ENCODE measurements at regions of chr10 and their contacts with region 1.

Region 1: GRCh38 chr10:6473901-6474370 is 106.1 kb downstream of the PRKCQ start:
- DNase-seq: no peak
- H3K4me3 Mint-ChIP-seq: peak overlapping the region; percentile 83
- H3K27ac Mint-ChIP-seq: peak overlapping the region; percentile 95
- H3K4me1 Mint-ChIP-seq: peaks cover 60% of the 10 kb centered on the region
- H3K27me3 Mint-ChIP-seq: no peaks in the 10 kb centered on the region

Region 2: GRCh38 chr10:6423004-6423403 is 50.9 kb before region 1 on chr10:
- intact Hi-C with region 1: loop called (anchors 2 kb)
- DNase-seq: no peak
- H3K4me3 Mint-ChIP-seq: no peak overlapping the region
- H3K27ac Mint-ChIP-seq: peak overlapping the region; percentile 88
- H3K4me1 Mint-ChIP-seq: peaks cover 26% of the 10 kb centered on the region
- H3K27me3 Mint-ChIP-seq: no peaks in the 10 kb centered on the region

Region 3: GRCh38 chr10:6486297-6486696 is 12.4 kb after region 1 on chr10:
- intact Hi-C with region 1: no loop called
- DNase-seq: no peak
- H3K4me3 Mint-ChIP-seq: no peak overlapping the region
- H3K27ac Mint-ChIP-seq: no peak overlapping the region
- H3K4me1 Mint-ChIP-seq: peaks cover 59% of the 10 kb centered on the region
- H3K27me3 Mint-ChIP-seq: no peaks in the 10 kb centered on the region

Region 4: GRCh38 chr10:6612371-6612770 is 138.4 kb after region 1 on chr10:
- intact Hi-C with region 1: no loop called
- DNase-seq: no peak
- H3K4me3 Mint-ChIP-seq: peak overlapping the region; percentile 6
- H3K27ac Mint-ChIP-seq: peak overlapping the region; percentile 44
- H3K4me1 Mint-ChIP-seq: peaks cover 79% of the 10 kb centered on the region
- H3K27me3 Mint-ChIP-seq: no peaks in the 10 kb centered on the region

Region 5: GRCh38 chr10:6912424-6912823 is 438.5 kb after region 1 on chr10:
- intact Hi-C with region 1: loop called (anchors 5 kb)
- DNase-seq: no peak
- H3K4me3 Mint-ChIP-seq: no peak overlapping the region
- H3K27ac Mint-ChIP-seq: no peak overlapping the region
- H3K4me1 Mint-ChIP-seq: no peaks in the 10 kb centered on the region
- H3K27me3 Mint-ChIP-seq: peaks cover 21% of the 10 kb centered on the region

Region 6: GRCh38 chr10:7351894-7352293 is 878.0 kb after region 1 on chr10:
- intact Hi-C with region 1: no loop called
- DNase-seq: no peak
- H3K4me3 Mint-ChIP-seq: no peak overlapping the region
- H3K27ac Mint-ChIP-seq: no peak overlapping the region
- H3K4me1 Mint-ChIP-seq: peaks cover 11% of the 10 kb centered on the region
- H3K27me3 Mint-ChIP-seq: no peaks in the 10 kb centered on the region

Measured in activated T-helper 2 cell treated with anti-CD3 and anti-CD28 coated beads, Interferon-gamma antibody, Interleukin-2, Interleukin-4, amounts not matched to agents 10 μg/mL and 5 μg/mL and 100 μg/mL, durations not matched to agents 14 hours and 24 hours and 36 hours (primary cell).